PC-9 (cell line): ENCODE measurements at regions of chr9 and their contacts with region 1.

Region 1: DNA sequence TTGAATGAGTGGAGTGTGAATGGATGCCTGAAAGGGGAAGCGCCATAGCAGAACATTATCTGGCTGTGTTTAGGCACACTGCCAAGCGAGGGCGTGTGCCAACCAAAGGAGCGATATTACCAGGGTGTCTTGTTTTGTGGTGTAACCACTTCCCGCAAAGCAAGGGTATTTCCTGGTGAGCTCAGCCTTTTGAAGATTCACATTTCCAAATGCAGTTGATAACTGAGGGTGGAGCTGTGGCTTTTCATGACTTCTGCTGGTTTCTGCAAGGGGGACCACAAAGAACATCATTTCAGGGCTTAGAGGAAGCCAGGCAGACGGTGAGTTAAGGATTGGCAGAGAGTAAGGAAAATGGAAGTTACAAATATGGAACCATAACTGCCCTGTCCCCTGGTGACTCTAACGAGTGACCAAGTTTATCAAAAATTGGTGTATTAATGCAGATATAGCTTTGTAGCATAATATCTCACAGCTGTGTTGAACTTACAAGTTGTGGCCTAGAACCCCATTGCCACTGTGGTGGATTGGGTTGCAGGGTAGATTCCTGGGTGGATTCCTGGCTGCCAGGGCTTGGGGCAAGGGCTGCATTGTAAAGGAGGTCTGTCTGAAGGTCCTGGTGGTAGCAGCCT is 71.4 kb downstream of the RALGPS1 start:
- DNase-seq: peak; percentile 92 to 98
- H3K4me3 ChIP-seq: peak overlapping the region; percentile 10; the same call in 1 of the 2 replicates
- H3K27ac ChIP-seq: peak overlapping the region; percentile 87
- H3K4me1 ChIP-seq: peaks cover 48% of the 10 kb centered on the region
- H3K27me3 ChIP-seq: no peaks in the 10 kb centered on the region
- CTCF ChIP-seq: no peak; the same call in 1 of the 2 replicates

Region 2: GRCh38 chr9:126915281-126915816 is 70.6 kb before region 1 on chr9:
- CTCF ChIA-PET with region 1: no interaction called
- POLR2A ChIA-PET with region 1: no interaction called
- intact Hi-C with region 1: no loop called
- DNase-seq: peak; percentile 51 to 87
- H3K4me3 ChIP-seq: peak overlapping the region; percentile 61
- H3K27ac ChIP-seq: no peak overlapping the region
- H3K4me1 ChIP-seq: peaks cover 6% of the 10 kb centered on the region; the same call in 1 of the 2 replicates
- H3K27me3 ChIP-seq: no peaks in the 10 kb centered on the region
- CTCF ChIP-seq: no peak

Region 3: DNA sequence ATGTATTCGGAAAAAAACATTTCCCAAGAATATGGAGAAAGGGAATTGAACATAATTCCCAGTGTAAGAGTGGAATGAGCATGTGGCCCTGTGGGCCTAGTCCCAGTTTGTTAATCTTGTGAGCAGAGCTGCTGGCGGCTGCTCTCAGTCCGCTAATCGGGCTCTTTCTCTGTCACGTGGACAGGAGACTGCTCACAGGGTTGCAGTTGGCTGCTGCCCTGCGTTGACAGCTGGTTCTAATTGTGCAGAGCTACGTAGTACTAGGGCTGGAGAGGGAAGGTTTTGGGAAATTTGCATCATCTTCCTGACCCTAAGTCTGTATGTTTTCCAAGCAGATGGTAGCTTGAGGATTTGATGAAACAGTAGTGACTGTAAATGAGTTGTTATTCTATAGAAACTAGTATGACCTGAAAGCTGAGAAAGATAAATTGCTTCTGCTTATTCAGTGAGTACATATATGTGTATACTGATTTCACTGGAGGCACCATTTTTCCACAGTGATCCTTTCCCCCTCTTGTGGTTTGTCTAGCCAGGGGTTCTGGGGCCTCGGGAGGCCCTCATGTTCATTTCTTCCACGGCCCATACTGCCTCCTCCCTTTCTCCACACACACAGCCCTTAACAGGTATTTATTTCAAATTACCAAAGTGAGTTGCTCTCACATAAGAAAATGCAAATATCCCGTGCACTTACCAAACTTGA is 35.8 kb after region 1 on chr9:
- CTCF ChIA-PET with region 1: no interaction called
- POLR2A ChIA-PET with region 1: no interaction called
- intact Hi-C with region 1: loop called (anchors 1 kb)
- DNase-seq: no peak
- H3K4me3 ChIP-seq: no peak overlapping the region
- H3K27ac ChIP-seq: no peak overlapping the region
- H3K4me1 ChIP-seq: peaks cover 29% of the 10 kb centered on the region
- H3K27me3 ChIP-seq: no peaks in the 10 kb centered on the region
- CTCF ChIP-seq: no peak

Region 4: DNA sequence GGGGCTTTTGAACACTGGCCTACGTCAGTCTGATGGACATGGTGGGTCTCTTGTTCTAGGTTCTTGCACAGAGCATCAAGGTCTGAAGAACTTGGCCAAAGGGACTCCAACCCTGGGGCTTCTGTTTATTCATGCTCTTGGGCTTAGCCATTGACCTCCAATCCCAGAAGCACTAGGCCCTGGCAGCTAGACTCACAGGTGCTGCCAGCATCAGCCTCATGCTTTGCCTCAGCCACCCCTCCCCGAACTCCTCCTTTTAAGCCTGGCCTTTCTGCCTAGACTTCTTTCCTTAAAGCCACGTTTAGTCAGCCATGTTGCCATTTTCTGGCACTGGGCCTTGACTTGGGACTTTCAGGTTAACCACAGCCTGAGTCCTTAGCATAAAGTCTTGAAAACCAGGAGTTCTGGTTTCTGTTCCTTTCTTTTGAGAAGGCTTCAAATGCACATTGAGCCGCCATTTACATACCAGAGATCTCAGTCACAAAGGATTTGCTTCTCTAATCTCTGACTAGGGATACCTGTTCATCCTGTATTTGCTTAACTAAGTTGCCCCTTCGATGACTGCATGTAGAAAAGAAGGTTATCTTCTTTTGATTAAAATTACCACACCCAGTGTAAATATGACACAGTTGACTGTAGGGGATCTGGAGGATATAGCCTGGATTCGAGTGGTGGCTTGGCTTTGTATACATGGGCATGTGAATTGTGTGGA is 81.8 kb after region 1 on chr9:
- CTCF ChIA-PET with region 1: no interaction called
- POLR2A ChIA-PET with region 1: interaction called, 3 read pairs
- intact Hi-C with region 1: loop called (anchors 1 kb)
- DNase-seq: peak; percentile 86 to 99
- H3K4me3 ChIP-seq: no peak overlapping the region
- H3K27ac ChIP-seq: peak overlapping the region; percentile 94
- H3K4me1 ChIP-seq: peaks cover 56% of the 10 kb centered on the region
- H3K27me3 ChIP-seq: no peaks in the 10 kb centered on the region
- CTCF ChIP-seq: no peak

Region 5: GRCh38 chr9:127187231-127187956 is 201.4 kb after region 1 on chr9:
- CTCF ChIA-PET with region 1: no interaction called
- POLR2A ChIA-PET with region 1: interaction called, 5 read pairs
- intact Hi-C with region 1: loop called (anchors 1 kb)
- DNase-seq: peak; percentile 89 to 98
- H3K4me3 ChIP-seq: no peak overlapping the region
- H3K27ac ChIP-seq: peak overlapping the region; percentile 82
- H3K4me1 ChIP-seq: peaks cover 41% of the 10 kb centered on the region
- H3K27me3 ChIP-seq: no peaks in the 10 kb centered on the region
- CTCF ChIP-seq: no peak